Right ventricle myocardium inferior (tissue), 1 donor: ENCODE measurements at regions of chr4 and their contacts with region 1.

Region 1: GRCh38 chr4:54139332-54139731 is 39.4 kb downstream of the GSX2 start:
- DNase-seq: no peak
- ATAC-seq: peak; percentile 59

Region 2: GRCh38 chr4:54082168-54082567 is 57.2 kb before region 1 on chr4:
- intact Hi-C with region 1: no loop called
- DNase-seq: no peak
- ATAC-seq: no peak

Region 3: GRCh38 chr4:54187148-54187547 is 47.8 kb after region 1 on chr4:
- intact Hi-C with region 1: loop called (anchors 10 kb)
- DNase-seq: no peak
- ATAC-seq: peak; percentile 78

Region 4: DNA sequence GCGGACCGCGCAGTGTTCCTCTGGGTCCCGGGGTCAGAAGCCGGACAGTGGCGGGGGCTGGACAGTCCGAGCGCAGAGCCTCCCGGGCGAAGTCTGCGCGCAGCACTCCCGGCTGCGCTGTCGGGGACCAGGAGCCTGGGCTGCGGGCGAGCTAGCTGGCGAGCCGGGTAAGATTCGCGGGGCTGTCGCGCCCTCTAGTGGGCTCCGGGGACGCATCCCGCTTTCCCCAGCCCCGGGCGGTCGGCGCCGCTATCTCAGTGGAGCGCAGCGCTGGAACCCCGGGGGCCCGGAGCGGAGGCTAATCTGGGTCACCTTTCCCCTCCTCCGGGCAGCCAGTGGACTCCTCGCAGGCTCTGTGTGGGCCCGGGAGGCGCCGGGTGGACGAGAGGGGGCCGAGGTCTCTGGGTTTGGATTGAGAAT is 94.0 kb after region 1 on chr4:
- intact Hi-C with region 1: no loop called
- DNase-seq: peak; percentile 91
- ATAC-seq: peak; percentile 81